ENCODE measurements at regions of chr3 and their contacts with region 1.

Region 1: GRCh38 chr3:53513556-53514190 is 19.3 kb downstream of the CACNA1D start:
- DNase-seq: peak; percentile 39
- H3K4me3 Mint-ChIP-seq: no peak overlapping the region
- H3K27ac Mint-ChIP-seq: no peak overlapping the region
- H3K4me1 Mint-ChIP-seq: no peaks in the 10 kb centered on the region
- H3K27me3 Mint-ChIP-seq: peaks cover 43% of the 10 kb centered on the region
- CTCF ChIP-seq: peak; percentile 27

Region 2: GRCh38 chr3:53303957-53304356 is 209.7 kb before region 1 on chr3:
- CTCF ChIA-PET with region 1: interaction called, 3 read pairs
- POLR2A ChIA-PET with region 1: no interaction called
- intact Hi-C with region 1: loop called (anchors 1 kb)
- DNase-seq: no peak
- H3K4me3 Mint-ChIP-seq: no peak overlapping the region
- H3K27ac Mint-ChIP-seq: no peak overlapping the region
- H3K4me1 Mint-ChIP-seq: no peaks in the 10 kb centered on the region
- H3K27me3 Mint-ChIP-seq: no peaks in the 10 kb centered on the region
- CTCF ChIP-seq: no peak

Region 3: DNA sequence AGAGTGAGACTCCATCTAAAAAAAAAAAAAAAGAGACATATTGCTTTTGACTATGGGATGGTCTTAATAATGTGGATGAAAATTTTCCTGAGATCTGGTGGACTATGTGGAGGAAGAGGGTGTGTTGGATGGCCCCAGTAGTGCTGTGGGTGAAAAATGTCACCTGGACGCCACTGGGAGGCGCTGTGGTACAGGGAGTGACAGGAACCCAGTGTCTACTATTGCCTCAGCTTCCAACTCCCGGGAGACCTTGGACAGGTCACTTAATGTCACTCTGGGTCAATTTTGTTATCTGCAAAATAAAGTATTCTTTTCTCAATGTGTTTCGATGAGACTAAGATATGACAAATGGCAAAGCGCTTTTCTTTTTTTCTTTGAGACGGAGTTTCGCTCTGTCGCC is 138.7 kb before region 1 on chr3:
- CTCF ChIA-PET with region 1: interaction called, 3 read pairs
- POLR2A ChIA-PET with region 1: no interaction called
- intact Hi-C with region 1: loop called (anchors 10 kb)
- DNase-seq: peak; percentile 83
- H3K4me3 Mint-ChIP-seq: no peak overlapping the region
- H3K27ac Mint-ChIP-seq: no peak overlapping the region
- H3K4me1 Mint-ChIP-seq: peaks cover 4% of the 10 kb centered on the region
- H3K27me3 Mint-ChIP-seq: peaks cover 26% of the 10 kb centered on the region
- CTCF ChIP-seq: peak; percentile 87